ENCODE measurements at regions of chr1 and their contacts with region 1.

Region 1: GRCh38 chr1:12300706-12301105 is 70.9 kb downstream of the VPS13D start:
- DNase-seq: no peak
- H3K4me3 ChIP-seq: no peak overlapping the region
- H3K4me3 Mint-ChIP-seq: no peak overlapping the region
- H3K27ac Mint-ChIP-seq: no peak overlapping the region
- H3K4me1 ChIP-seq: no peaks in the 10 kb centered on the region
- H3K4me1 Mint-ChIP-seq: peaks cover 6% of the 10 kb centered on the region
- H3K27me3 ChIP-seq: no peaks in the 10 kb centered on the region
- H3K27me3 Mint-ChIP-seq: no peaks in the 10 kb centered on the region
- CTCF ChIP-seq: no peak

Region 2: DNA sequence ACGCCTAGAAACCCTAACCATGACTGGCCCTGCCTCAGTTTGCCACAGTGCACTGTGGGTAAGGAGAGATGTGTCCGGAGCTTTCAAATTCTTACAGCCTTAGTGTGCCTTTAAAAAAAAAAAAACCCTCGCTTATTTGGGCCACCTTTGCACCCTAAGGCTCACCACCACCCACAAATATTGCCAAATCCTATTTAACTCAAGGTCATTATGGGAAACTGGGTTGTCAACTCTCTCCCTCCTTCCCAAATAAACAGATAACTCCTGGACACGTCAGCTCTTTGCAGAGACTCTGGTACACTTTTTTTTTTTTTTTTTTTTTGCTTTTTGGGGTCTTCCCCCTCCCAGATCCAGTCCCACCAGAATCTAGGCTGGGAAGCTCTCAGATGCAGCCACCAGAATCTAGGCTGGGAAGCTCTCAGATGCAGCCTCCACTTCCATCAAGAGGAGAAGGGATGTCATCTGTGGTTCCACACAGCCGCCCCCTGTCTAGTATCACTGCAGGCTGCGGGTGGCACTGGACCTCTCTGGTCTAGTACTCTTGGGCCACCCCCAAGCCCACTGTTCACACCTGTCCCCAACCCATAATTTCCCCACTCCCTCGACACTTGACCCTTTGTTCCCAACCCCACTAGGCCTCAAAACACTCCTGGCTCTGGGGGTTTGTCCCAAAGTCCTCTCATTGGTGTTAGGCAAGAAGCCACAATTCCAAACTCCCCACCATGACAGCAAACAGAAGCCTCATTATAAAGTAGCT is 313.9 kb after region 1 on chr1:
- CTCF ChIA-PET with region 1: no interaction called
- POLR2A ChIA-PET with region 1: interaction called, 10 read pairs
- intact Hi-C with region 1: no loop called
- DNase-seq: no peak
- H3K4me3 ChIP-seq: peak overlapping the region; percentile 89
- H3K4me3 Mint-ChIP-seq: peak overlapping the region; percentile 93
- H3K27ac Mint-ChIP-seq: peak overlapping the region; percentile 96
- H3K4me1 ChIP-seq: peaks cover 18% of the 10 kb centered on the region
- H3K4me1 Mint-ChIP-seq: peaks cover 14% of the 10 kb centered on the region
- H3K27me3 ChIP-seq: no peaks in the 10 kb centered on the region
- H3K27me3 Mint-ChIP-seq: no peaks in the 10 kb centered on the region
- CTCF ChIP-seq: no peak